CD4-positive, alpha-beta memory T cell (primary cell): ENCODE measurements at regions of chr10 and their contacts with region 1.

Region 1: DNA sequence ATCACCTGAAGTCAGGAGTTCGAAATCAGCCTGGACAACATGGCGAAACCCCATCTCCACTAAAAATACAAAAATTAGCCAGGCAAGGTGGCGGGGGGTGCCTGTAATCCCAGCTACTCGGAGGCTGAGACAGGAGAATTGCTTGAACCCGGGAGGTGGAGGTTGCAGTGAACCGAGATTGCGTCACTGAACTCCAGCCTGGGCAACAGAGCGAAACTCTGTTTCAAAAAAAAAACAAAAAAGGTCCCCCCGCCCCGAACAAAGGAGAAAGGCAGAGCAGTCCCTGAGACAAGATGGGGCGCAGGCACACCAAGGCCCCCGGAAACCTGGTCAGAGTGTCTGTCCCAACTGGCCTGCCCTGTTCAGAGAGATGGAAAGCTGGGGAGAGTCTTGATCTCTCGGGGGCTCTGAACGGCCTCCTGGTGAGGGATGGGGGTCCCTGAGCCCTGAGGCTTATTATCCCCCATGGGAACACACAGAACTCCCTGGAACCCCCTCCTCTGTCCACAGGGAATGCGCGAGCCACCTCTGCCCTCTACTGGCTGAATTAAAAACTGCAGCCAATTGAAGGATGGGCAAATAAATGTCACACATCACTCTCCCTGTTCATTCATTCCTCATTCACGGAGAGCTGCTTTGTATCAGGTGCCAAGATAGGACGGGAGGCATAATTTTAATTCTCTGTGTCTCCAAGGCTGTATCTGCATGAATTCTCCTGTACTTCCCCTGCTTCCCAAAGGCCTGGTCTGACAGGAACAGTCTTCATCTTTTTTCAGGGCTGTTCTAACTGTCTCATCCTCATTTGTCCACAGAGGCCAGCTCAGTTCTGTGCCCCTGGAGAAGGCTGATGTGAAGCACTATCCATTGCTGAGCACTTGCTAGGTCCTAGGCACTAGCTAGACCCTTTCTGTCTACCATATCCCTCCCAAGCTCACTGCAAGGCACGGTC is 28.9 kb downstream of the MAT1A start:
- DNase-seq: peak in 4 of 5 donors; percentile 17 to 30 (median 26)
- H3K4me3 ChIP-seq: no peak overlapping the region
- H3K4me3 Mint-ChIP-seq: no peak overlapping the region
- H3K27ac ChIP-seq: no peak overlapping the region
- H3K27ac Mint-ChIP-seq: no peak overlapping the region
- H3K4me1 ChIP-seq: no peaks in the 10 kb centered on the region
- H3K4me1 Mint-ChIP-seq: no peaks in the 10 kb centered on the region
- H3K27me3 ChIP-seq: no peaks in the 10 kb centered on the region
- H3K27me3 Mint-ChIP-seq: peaks cover 1 to 11% of the 10 kb centered on the region in 2 donors

Region 2: GRCh38 chr10:80272793-80273517 is 12.4 kb after region 1 on chr10:
- CTCF ChIA-PET with region 1: interaction called, 11 read pairs
- POLR2A ChIA-PET with region 1: no interaction called
- intact Hi-C with region 1: no loop called
- DNase-seq: no peak
- H3K4me3 ChIP-seq: no peak overlapping the region
- H3K4me3 Mint-ChIP-seq: no peak overlapping the region
- H3K27ac ChIP-seq: no peak overlapping the region
- H3K27ac Mint-ChIP-seq: no peak overlapping the region
- H3K4me1 ChIP-seq: no peaks in the 10 kb centered on the region
- H3K4me1 Mint-ChIP-seq: no peaks in the 10 kb centered on the region
- H3K27me3 ChIP-seq: no peaks in the 10 kb centered on the region
- H3K27me3 Mint-ChIP-seq: peaks cover 6 to 22% of the 10 kb centered on the region in 2 donors

Region 3: DNA sequence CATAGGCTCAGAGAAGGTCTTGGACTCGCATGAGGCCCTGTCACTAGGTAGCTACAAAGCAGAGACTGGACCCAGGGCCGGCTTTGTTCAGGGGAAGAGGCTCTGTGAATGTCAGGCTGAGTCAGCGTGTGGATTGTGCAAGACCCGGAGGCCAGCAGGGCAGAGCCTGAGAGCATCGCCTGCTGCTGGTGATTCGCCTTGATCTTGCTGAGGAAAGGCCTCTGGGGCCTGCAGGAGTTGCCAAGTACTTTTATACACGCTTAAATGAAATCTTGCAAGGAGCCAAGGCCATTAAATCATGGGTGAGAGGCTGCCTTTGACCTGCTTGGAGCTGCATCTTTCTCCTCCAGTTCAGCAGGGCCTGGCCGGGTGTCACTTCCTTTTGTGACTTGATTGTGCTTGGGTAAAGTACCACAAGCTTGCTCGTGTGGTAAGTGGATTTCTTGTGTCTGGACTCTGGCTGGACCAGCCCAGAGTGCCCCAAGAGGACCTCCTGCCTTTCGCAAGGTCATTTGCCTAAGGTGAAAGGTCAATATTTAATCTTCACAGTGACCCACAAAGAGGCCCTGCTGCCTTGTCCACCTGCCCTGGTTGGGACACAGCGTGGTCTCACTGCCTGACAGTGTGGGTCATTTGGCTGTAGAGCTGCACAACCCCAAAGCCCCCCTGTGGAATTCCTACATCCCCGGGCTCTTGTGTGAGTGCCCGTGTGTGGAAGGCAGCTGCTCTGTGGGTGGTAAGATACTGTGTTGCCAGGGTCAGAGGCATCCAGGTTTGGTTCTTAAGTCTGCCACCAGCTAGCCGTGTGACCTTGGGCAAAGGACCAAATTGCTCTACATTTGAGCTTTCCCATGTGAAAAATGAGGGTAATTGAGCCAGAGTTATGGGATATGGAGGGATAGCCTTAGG is 238.5 kb after region 1 on chr10:
- CTCF ChIA-PET with region 1: no interaction called
- POLR2A ChIA-PET with region 1: no interaction called
- intact Hi-C with region 1: no loop called
- DNase-seq: peak in 1 of 5 donors; percentile 74
- H3K4me3 ChIP-seq: peak overlapping the region; percentile 1 to 22
- H3K4me3 Mint-ChIP-seq: peak overlapping the region; percentile 48 to 92 (median 81)
- H3K27ac ChIP-seq: peak overlapping the region; percentile 62
- H3K27ac Mint-ChIP-seq: peak overlapping the region; percentile 83 to 97 (median 95)
- H3K4me1 ChIP-seq: peaks cover 100% of the 10 kb centered on the region
- H3K4me1 Mint-ChIP-seq: peaks cover 90 to 100% (median 95%) of the 10 kb centered on the region in 4 donors
- H3K27me3 ChIP-seq: no peaks in the 10 kb centered on the region
- H3K27me3 Mint-ChIP-seq: no peaks in the 10 kb centered on the region